ENCODE measurements at regions of chr13 and their contacts with region 1.

Region 1: GRCh38 chr13:75372517-75372916 is 109.5 kb downstream of the TBC1D4 start:
- DNase-seq: peak in 1 of 2 donors; percentile 52
- ATAC-seq: peak in 6 of 8 donors; percentile 33 to 55 (median 48)
- H3K4me3 ChIP-seq: peak overlapping the region in 1 of 10 donors; percentile 9
- H3K27ac ChIP-seq: peak overlapping the region in 8 of 10 donors; percentile 38 to 81 (median 62)
- H3K4me1 ChIP-seq: peaks cover 0 to 67% (median 40%) of the 10 kb centered on the region in 9 donors
- H3K27me3 ChIP-seq: no peaks in the 10 kb centered on the region
- CTCF ChIP-seq: peak; percentile 54 to 86 (median 81)

Region 2: GRCh38 chr13:75410207-75410606 is 37.7 kb after region 1 on chr13:
- intact Hi-C with region 1: loop called in 1 of 10 experiments (anchors 5 kb)
- DNase-seq: peak in 1 of 2 donors; percentile 23
- ATAC-seq: peak in 7 of 8 donors; percentile 71 to 86 (median 81)
- H3K4me3 ChIP-seq: peak overlapping the region in 8 of 10 donors; percentile 6 to 37 (median 27)
- H3K27ac ChIP-seq: peak overlapping the region; percentile 14 to 84 (median 70)
- H3K4me1 ChIP-seq: peaks cover 0 to 31% (median 19%) of the 10 kb centered on the region in 9 donors
- H3K27me3 ChIP-seq: no peaks in the 10 kb centered on the region
- CTCF ChIP-seq: no peak

Region 3: GRCh38 chr13:75537401-75538365 is 165.2 kb after region 1 on chr13 and contains the start of gene COMMD6:
- intact Hi-C with region 1: loop called in 3 of 10 experiments (anchors 2 to 10 kb)
- DNase-seq: peak; percentile 75 to 80
- ATAC-seq: peak; percentile 94 to 98 (median 97)
- H3K4me3 ChIP-seq: peak within 1 kb of the TSS; percentile 26 to 89 (median 80)
- H3K27ac ChIP-seq: peak within 1 kb of the TSS; percentile 18 to 91 (median 82)
- H3K4me1 ChIP-seq: peaks cover 0 to 30% (median 15%) of the 10 kb centered on the region in 9 donors
- H3K27me3 ChIP-seq: no peaks in the 10 kb centered on the region
- CTCF ChIP-seq: peak; percentile 8 to 70 (median 57)
- total RNA-seq, gene COMMD6: 96.5 to 138 (median 124) TPM

Region 4: GRCh38 chr13:76148926-76149325 is 776.4 kb after region 1 on chr13:
- intact Hi-C with region 1: no loop called
- DNase-seq: no peak
- ATAC-seq: no peak
- H3K4me3 ChIP-seq: no peak overlapping the region
- H3K27ac ChIP-seq: no peak overlapping the region
- H3K4me1 ChIP-seq: no peaks in the 10 kb centered on the region
- H3K27me3 ChIP-seq: no peaks in the 10 kb centered on the region
- CTCF ChIP-seq: no peak

Measured in heart right ventricle (tissue), 16 donors.